A673 (cell line): ENCODE measurements at regions of chr11 and their contacts with region 1.

Region 1: DNA sequence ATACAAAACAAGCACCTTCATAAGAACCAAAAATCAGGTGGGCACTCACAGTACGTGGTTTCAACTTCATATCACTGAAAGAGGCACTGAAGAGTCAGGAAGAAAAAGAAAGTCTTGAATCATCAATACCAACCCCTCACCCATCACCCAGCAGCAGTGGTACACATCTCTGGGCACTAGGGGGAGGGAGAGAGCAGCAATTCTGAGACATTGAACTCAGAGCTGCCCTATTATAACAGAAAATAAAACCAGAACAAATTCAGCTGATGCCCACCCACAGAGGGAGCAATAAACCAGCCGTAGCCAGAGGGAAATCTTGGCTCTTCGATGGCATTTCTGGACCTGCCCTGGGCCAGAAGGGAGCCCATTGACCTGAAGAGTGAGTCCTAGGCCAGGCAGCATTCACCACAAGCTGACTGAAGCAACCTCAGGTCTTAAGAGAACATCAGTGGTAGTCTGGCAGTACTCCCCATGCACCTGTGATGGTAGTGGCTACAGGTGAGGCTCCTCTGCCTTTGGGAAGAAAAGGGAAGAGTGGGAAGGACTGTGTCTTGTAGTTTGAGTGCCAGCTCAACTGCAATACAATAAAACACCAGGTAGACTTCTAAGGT is 42.2 kb upstream of the FAM181B start:
- DNase-seq: peak; percentile 89
- H3K4me3 ChIP-seq: no peak overlapping the region
- H3K27ac ChIP-seq: no peak overlapping the region
- H3K4me1 ChIP-seq: peaks cover 4% of the 10 kb centered on the region
- H3K27me3 ChIP-seq: no peaks in the 10 kb centered on the region
- CTCF ChIP-seq: peak; percentile 98

Region 2: DNA sequence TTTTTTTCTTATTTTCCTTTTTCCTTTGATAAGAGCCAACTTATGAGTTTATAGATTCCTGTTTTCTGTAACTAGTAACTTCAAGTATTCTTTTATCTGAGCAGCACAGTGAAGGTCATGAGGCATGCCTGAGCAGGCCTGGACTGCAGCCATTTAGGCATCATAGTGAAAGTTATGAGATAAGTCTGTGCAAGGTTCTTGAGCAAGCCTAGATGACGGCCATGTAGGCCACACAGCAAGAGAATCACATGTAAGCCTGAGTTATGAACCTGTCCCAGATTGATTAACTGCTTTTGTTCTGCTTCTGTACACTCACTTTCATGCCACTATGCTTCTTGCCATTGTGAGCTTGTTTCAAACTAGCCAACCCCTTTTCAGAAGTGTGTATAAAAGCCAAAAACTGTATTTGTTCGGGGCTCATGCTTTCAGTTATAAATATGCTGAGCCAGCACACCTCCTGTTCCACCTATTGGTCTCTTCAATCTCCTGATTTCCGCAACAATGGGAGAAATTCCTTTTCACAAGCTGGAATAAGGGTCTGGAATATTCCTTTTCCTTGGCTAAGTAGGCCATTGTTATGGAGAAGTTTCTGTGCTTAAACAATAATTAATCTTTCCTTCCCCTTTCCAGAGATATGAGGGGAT is 787.9 kb before region 1 on chr11:
- CTCF ChIA-PET with region 1: interaction called, 12 read pairs
- POLR2A ChIA-PET with region 1: no interaction called
- intact Hi-C with region 1: no loop called
- DNase-seq: no peak
- H3K4me3 ChIP-seq: no peak overlapping the region
- H3K27ac ChIP-seq: no peak overlapping the region
- H3K4me1 ChIP-seq: no peaks in the 10 kb centered on the region
- H3K27me3 ChIP-seq: no peaks in the 10 kb centered on the region
- CTCF ChIP-seq: no peak